AG04449 (cell line): ENCODE measurements at regions of chr2 and their contacts with region 1.

Region 1: DNA sequence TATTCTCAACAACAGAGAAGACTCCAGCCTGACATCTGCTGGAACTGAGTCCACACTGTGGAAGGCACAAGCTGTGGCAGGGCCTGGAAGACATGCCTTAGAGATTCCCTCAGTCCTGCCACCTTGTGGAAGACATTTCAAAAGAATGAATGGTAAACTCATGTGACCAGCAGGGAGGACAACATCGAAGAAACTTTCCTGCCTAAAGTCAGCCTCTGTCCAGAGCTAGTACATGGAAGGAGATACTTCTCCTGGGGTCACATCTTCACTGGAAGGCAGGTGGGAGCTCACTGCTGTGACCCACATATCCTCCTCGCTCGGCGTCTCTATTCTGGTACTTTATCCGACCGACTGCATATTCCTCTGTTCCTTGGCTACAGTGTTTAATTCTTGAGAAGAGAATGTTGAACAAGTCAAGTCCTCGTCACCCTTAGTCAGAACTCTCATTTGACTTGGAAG is 59.5 kb downstream of the PUM2 start:
- DNase-seq: peak; percentile 23
- H3K4me3 ChIP-seq: no peak overlapping the region
- CTCF ChIP-seq: peak; percentile 76

Region 2: GRCh38 chr2:19835781-19836281 is 455.3 kb before region 1 on chr2:
- CTCF ChIA-PET with region 1: no interaction called
- POLR2A ChIA-PET with region 1: no interaction called
- DNase-seq: no peak
- H3K4me3 ChIP-seq: no peak overlapping the region
- CTCF ChIP-seq: no peak

Region 3: GRCh38 chr2:19911799-19912509 is 379.2 kb before region 1 on chr2:
- CTCF ChIA-PET with region 1: no interaction called
- POLR2A ChIA-PET with region 1: no interaction called
- DNase-seq: peak; percentile 63
- H3K4me3 ChIP-seq: no peak overlapping the region
- CTCF ChIP-seq: no peak

Region 4: DNA sequence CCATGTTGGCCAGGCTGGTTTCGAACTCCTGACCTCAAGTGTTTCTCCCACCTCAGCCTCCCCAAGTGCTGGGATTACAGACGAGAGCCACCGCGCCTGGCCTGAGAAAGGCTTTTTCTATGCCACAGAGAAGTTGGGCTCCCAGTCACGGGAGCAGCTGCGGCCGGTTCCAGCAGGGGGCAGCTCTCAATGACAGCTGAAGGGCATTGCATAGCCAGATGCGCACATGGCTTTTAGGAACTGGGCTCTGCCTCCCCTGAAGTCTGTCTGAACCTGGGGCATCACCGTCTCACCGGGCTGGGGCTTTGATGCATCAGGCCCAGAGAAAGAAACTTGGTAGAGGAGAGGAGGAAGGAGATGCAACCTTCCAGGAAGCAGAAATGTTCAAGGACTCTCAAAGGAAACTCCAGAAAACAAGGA is 155.5 kb before region 1 on chr2:
- CTCF ChIA-PET with region 1: interaction called, 40 read pairs
- POLR2A ChIA-PET with region 1: no interaction called
- DNase-seq: no peak
- H3K4me3 ChIP-seq: no peak overlapping the region
- CTCF ChIP-seq: peak; percentile 92

Region 5: GRCh38 chr2:20172273-20173055 is 118.7 kb before region 1 on chr2:
- CTCF ChIA-PET with region 1: no interaction called
- POLR2A ChIA-PET with region 1: no interaction called
- DNase-seq: no peak
- H3K4me3 ChIP-seq: no peak overlapping the region
- CTCF ChIP-seq: no peak

Region 6: GRCh38 chr2:20264629-20265028 is 26.5 kb before region 1 on chr2:
- CTCF ChIA-PET with region 1: interaction called, 176 read pairs
- POLR2A ChIA-PET with region 1: no interaction called
- DNase-seq: no peak
- H3K4me3 ChIP-seq: no peak overlapping the region
- CTCF ChIP-seq: no peak

Region 7: DNA sequence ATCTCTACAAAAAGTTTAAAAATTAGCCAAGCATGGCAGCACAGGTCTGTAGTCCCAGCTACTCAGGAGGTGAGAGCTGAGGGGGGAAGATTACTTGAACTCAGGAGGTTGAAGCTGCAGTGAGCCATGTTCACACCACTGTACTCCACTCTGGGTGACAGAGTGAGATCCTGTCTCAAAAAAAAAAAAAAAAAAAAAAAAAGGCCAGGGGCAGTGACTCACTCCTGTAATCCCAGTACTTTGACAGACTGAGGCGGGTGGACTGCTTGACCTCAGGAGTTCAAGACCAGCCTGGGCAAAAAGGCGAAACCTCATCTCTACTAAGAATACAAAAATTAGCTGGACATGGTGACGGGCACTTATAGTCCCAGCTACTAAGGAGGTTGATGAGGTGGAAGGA is 22.5 kb after region 1 on chr2:
- CTCF ChIA-PET with region 1: interaction called, 13 read pairs
- POLR2A ChIA-PET with region 1: no interaction called
- DNase-seq: no peak
- H3K4me3 ChIP-seq: no peak overlapping the region
- CTCF ChIP-seq: no peak

Region 8: GRCh38 chr2:20381444-20381843 is 90.3 kb after region 1 on chr2:
- CTCF ChIA-PET with region 1: no interaction called
- POLR2A ChIA-PET with region 1: no interaction called
- DNase-seq: no peak
- H3K4me3 ChIP-seq: no peak overlapping the region
- CTCF ChIP-seq: no peak